Activated naive CD4-positive, alpha-beta T cell treated with anti-CD3 and anti-CD28 coated beads for 36 hours (primary cell): ENCODE measurements at regions of chr6 and their contacts with region 1.

Region 1: DNA sequence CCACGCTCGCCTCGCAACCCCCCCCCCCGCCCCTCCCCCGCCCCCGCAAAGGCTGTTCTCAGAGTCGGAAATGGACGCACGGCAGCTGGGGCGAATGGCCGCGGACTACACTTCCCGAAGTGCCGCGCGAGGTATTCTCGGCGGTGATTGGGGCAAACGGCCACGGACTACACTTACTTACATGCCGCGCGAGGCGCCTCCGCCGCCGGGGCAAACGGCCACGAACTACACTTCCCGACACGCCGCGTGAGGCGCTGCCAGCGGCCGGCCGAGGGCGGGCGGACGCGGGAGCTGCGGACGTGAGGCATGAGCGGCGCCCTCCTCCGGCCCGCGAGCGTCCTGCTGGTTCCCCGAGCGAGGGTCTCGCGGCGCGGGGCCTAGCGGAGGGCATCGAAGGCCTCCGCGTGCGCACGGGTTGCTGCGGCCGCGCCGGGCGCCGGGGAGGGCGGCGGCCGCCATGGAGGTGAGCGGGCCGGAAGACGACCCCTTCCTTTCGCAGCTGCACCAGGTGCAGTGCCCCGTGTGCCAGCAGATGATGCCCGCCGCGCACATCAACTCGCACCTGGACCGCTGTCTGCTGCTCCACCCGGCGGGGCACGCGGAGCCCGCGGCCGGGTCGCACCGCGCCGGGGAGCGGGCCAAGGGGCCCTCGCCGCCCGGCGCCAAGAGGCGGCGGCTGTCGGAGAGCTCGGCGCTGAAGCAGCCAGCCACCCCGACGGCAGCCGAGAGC is at the start of gene WRNIP1:
- DNase-seq: peak; percentile 97
- H3K4me3 Mint-ChIP-seq: peak within 1 kb of the TSS; percentile 93
- H3K27ac Mint-ChIP-seq: peak within 1 kb of the TSS; percentile 96
- H3K4me1 Mint-ChIP-seq: peaks cover 45% of the 10 kb centered on the region
- H3K27me3 Mint-ChIP-seq: no peaks in the 10 kb centered on the region
- total RNA-seq, gene WRNIP1: 19.2 to 21.7 TPM

Region 2: DNA sequence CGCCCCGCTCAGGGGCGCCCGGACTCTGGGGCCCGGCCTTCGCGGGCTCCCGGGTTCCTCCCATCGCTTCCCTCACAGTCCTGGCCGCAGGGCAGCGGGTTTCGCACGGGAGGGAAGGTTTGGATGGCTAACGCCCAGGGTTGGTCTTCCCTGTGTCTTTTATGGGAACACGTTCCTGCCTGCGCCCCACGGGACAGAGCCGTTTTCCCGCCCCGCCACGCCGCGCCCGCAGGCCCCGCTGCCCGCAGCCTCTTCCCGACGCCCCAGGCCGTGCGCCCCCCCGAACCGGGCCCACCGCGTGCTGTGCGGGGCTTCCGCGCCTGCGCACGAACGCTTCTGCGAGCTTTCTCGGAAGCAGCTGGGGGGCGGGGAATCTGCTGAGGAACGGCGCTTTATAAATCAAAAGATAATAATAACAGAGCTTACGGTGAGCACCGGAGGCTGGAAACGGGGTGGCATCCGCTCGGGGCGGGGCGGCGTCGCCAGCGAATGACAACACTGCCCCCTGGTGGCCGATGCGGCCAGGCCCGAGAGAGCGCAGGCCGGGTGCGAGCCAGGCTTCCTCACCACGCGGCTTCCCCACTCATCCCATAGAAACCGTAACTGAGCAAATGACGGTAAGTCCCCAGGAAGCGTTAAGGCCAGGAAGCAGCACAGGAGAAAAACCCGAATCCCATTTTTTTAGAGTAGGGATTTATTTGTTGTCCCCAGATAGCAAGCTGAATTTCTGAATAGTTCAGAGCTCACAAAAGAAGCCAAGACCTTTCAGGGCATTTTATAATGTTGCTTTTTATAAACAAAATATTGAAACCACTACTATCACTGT is 131.0 kb before region 1 on chr6:
- CTCF ChIA-PET with region 1: interaction called, 3 read pairs
- intact Hi-C with region 1: loop called (anchors 2 kb)
- DNase-seq: peak; percentile 88
- H3K4me3 Mint-ChIP-seq: peak overlapping the region; percentile 58
- H3K27ac Mint-ChIP-seq: no peak overlapping the region
- H3K4me1 Mint-ChIP-seq: peaks cover 3% of the 10 kb centered on the region
- H3K27me3 Mint-ChIP-seq: peaks cover 11% of the 10 kb centered on the region

Region 3: GRCh38 chr6:2749969-2750600 is 15.2 kb before region 1 on chr6:
- CTCF ChIA-PET with region 1: interaction called, 72 read pairs
- intact Hi-C with region 1: no loop called
- DNase-seq: peak; percentile 83
- H3K4me3 Mint-ChIP-seq: no peak overlapping the region
- H3K27ac Mint-ChIP-seq: no peak overlapping the region
- H3K4me1 Mint-ChIP-seq: no peaks in the 10 kb centered on the region
- H3K27me3 Mint-ChIP-seq: peaks cover 8% of the 10 kb centered on the region

Region 4: GRCh38 chr6:2841264-2842138 is 76.2 kb after region 1 on chr6 and contains the start of gene SERPINB1:
- CTCF ChIA-PET with region 1: no interaction called
- intact Hi-C with region 1: loop called (anchors 2 kb)
- DNase-seq: peak; percentile 94
- H3K4me3 Mint-ChIP-seq: peak within 1 kb of the TSS; percentile 81
- H3K27ac Mint-ChIP-seq: peak within 1 kb of the TSS; percentile 87
- H3K4me1 Mint-ChIP-seq: peaks cover 61% of the 10 kb centered on the region
- H3K27me3 Mint-ChIP-seq: no peaks in the 10 kb centered on the region
- total RNA-seq, gene SERPINB1: 200 to 208 TPM

Region 5: GRCh38 chr6:2988426-2989331 is 223.3 kb after region 1 on chr6:
- CTCF ChIA-PET with region 1: interaction called, 3 read pairs
- intact Hi-C with region 1: loop called (anchors 1 kb)
- DNase-seq: peak; percentile 84
- H3K4me3 Mint-ChIP-seq: peak overlapping the region; percentile 87
- H3K27ac Mint-ChIP-seq: peak overlapping the region; percentile 97
- H3K4me1 Mint-ChIP-seq: peaks cover 12% of the 10 kb centered on the region
- H3K27me3 Mint-ChIP-seq: no peaks in the 10 kb centered on the region

Region 6: DNA sequence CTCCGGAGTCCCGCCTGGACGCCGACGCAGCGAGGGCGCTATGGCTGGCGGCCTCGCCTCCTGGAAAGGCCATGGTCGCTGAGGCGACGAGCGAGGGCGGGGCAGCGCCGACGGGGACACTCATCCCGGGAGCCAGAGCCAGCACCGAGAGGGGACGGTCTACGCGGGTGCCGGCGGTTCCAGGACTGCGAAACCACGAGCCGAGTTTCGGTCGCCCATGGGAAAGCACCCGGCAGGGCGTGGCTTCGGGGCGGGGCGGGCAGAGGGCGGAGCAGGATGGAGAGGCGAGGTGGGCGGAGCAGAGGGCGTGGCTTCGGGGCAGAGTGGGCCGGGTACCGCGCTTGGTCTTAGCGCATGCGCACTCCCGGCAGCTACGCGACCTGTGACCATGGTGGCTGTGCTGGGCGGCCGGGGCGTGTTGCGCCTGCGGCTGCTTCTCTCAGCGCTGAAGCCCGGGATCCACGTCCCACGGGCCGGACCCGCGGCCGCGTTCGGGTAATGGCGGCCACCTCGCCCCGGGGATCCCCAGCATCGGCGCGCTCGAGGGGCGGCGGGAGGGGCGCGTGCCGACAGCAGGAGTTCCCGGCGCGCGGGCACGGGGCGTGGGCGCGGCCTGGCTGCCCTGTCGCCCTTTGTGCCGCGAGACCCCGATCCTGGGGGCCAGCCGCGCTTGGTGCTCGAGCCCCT is 353.2 kb after region 1 on chr6 and contains the start of gene BPHL:
- CTCF ChIA-PET with region 1: no interaction called
- intact Hi-C with region 1: loop called (anchors 1 kb)
- DNase-seq: peak; percentile 99
- H3K4me3 Mint-ChIP-seq: peak within 1 kb of the TSS; percentile 83
- H3K27ac Mint-ChIP-seq: peak within 1 kb of the TSS; percentile 78
- H3K4me1 Mint-ChIP-seq: peaks cover 21% of the 10 kb centered on the region
- H3K27me3 Mint-ChIP-seq: no peaks in the 10 kb centered on the region
- total RNA-seq, gene BPHL: 6.9 to 7.5 TPM

Region 7: DNA sequence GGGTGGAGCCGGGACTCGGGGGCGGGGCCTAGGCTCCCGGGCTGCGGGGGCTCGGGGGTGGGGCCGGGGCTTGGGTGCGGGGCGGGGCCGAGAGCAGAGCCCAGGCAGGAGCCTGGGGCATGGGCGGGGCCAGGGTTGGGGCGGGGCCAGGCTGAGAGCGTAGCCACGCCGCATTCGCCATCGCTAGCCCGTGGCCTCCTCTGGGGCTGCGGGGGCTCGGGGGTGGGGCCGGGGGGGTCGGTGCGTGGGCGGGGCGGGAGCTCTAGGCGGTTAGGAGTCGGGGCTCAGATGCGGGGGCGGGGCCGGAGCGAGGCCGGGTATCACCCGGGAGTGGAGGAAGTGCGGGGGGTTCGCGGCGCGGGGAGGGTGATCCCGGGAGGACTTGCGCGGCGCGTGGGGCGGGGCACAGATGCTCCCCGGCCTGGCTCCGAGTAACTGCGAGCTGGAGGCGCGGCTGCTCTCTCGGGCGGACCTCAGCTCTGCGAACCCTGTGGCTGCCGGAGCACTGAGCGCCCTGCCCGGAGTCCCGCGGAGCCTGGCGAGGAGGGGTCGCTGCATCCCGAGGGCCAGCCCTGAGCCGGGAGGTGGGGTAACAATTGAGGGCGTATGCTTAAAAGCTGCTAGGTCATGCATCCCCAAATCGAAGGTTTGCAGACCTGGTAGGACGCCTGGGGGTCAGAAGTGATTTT is 1370.5 kb after region 1 on chr6:
- CTCF ChIA-PET with region 1: no interaction called
- intact Hi-C with region 1: loop called (anchors 10 kb)
- DNase-seq: peak; percentile 92
- H3K4me3 Mint-ChIP-seq: peak overlapping the region; percentile 81
- H3K27ac Mint-ChIP-seq: peak overlapping the region; percentile 65
- H3K4me1 Mint-ChIP-seq: peaks cover 40% of the 10 kb centered on the region
- H3K27me3 Mint-ChIP-seq: no peaks in the 10 kb centered on the region